Endothelial cell of umbilical vein (primary cell): ENCODE measurements at regions of chr11 and their contacts with region 1.

Region 1: DNA sequence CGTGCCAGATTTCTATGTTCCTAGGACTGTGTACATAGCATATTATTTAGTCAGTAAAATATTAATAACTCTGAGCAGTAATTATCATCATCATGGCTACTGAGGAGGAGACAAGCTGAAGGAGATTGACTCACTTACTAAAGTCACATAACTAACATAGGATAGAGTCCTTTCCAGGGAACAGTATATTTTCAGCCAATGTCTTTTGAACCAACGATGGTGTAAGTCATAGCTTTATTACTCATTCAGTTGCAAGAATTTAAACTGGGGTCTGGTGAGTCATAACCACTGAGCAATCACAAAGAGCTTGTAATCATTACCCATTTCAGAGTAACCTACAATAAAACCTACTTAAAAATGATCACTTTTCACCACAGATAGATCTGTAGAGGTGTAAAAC is 1564.8 kb upstream of the TENM4 start:
- DNase-seq: peak; percentile 43
- H3K4me3 ChIP-seq: no peak overlapping the region
- H3K27ac ChIP-seq: no peak overlapping the region
- H3K4me1 ChIP-seq: peaks cover 5% of the 10 kb centered on the region
- H3K27me3 ChIP-seq: no peaks in the 10 kb centered on the region
- CTCF ChIP-seq: no peak
- POLR2A ChIP-seq: no peak

Region 2: DNA sequence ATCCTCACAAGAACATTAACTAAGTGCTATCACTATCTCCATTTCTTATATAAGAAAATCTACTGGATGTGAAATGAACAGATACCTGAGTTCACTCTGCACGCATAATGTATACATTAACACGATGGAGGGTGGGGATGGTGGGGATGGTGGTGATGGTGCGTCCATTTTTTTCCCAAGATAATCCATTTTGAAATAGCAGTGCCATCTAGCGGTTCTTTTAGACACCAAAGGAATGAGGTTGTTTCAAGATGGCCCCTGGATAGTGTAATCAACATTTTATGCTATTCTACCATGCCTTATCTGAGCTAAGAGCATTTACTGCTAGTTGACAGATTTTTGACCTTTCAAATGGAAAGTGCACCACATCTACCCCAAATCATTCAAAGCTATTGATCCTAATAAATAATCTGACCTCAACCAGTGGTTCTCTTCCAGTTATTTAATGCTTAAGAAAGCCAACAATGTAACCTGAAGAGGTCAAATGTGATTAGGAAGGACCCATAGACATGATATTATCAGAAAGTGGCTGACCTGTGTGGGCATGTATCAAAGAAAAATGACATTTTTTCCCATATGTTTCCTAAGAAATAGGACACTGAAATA is 850.1 kb before region 1 on chr11:
- CTCF ChIA-PET with region 1: interaction called, 3 read pairs
- POLR2A ChIA-PET with region 1: no interaction called
- dilution Hi-C with region 1: no loop called
- intact Hi-C with region 1: loop called (anchors 1 kb)
- DNase-seq: peak; percentile 9
- H3K4me3 ChIP-seq: no peak overlapping the region
- H3K27ac ChIP-seq: no peak overlapping the region
- H3K4me1 ChIP-seq: no peaks in the 10 kb centered on the region
- H3K27me3 ChIP-seq: no peaks in the 10 kb centered on the region
- CTCF ChIP-seq: peak; percentile 15 to 28
- POLR2A ChIP-seq: no peak

Region 3: DNA sequence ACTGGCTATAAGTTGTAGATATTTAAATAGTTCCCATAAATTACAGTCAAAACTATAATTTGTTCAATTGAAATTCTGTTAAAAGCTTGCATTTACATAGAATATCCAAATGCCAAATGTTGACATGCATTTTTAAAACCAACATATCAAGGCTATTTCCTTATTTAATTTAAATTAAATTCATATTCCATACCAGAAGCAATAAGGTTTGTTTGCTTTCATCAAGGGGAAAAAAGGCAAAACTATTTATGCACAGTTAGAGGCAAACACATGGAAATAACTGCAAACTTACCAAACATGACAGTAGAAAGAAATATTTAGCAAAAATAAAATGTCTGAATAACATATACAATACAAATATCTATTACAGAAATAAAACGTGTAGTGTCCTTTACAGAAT is 16.5 kb after region 1 on chr11:
- CTCF ChIA-PET with region 1: interaction called, 10 read pairs
- POLR2A ChIA-PET with region 1: no interaction called
- dilution Hi-C with region 1: no loop called
- intact Hi-C with region 1: no loop called
- DNase-seq: no peak
- H3K4me3 ChIP-seq: no peak overlapping the region
- H3K27ac ChIP-seq: no peak overlapping the region
- H3K4me1 ChIP-seq: peaks cover 2% of the 10 kb centered on the region
- H3K27me3 ChIP-seq: no peaks in the 10 kb centered on the region
- CTCF ChIP-seq: no peak
- POLR2A ChIP-seq: no peak